ENCODE measurements at regions of chr2 and their contacts with region 1.

Region 1: DNA sequence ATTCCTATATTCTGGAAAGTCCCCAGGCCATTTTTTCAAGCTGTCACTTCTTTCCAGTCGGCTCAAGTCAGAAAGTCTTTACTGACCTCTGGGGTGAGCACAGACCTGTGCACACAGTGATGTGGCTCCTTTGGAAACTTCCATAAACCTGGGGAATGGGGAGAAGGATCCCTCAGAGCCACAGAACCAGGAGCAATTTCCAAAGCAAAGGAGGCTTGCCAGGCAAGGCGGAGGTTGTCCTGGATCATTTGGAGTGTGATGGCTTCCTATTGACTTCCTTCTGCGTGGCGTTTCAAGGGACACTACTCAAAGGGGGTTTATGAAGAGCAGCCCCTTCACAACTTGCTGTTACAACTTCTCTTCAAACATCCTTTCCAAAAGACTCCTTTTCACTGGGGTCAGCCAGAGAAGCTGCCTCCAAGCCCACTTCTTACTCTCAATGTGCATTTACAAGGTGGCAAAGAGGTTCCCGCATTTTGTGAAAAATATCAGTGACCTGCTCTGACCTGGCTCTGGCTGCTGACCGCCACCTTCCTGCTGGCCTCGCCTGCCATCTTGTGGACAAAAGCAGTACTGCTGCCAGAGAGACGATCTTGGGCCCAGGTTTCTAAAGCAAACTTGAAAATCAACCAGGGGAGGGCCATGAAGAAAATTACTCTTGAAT is 18.2 kb upstream of the TMEM247 start:
- DNase-seq: peak in 1 of 2 donors; percentile 90
- H3K4me3 ChIP-seq: no peak overlapping the region
- H3K27ac ChIP-seq: peak overlapping the region in 1 of 2 donors; percentile 45
- H3K4me1 ChIP-seq: peaks cover 0 to 8% of the 10 kb centered on the region in 2 donors
- H3K27me3 ChIP-seq: no peaks in the 10 kb centered on the region
- CTCF ChIP-seq: peak; percentile 96 to 100 (median 99)

Region 2: DNA sequence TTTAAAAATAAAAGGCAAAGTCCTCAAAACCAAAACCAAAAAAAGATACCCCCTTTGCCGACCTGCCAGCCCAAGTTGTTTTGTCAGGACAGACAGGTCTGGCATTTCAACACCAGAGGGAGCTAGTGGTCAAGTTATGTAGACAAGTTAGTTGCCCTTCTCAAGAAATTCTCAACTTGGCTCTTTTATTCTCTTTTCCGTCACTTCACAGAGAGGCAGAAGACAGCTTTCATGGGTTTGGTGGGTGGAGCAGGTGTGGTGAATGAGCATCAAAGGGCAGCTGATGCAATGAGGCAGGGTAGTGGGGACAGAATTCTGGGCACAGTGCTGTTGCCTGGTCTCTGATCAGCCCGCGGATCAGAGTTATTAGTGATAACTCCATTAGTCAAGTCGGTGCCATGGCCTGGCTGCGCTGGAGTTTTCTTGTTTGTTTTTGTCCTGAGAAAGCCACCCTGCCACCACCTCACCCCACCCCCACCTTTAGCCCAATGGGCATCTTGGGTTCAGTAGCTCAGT is 467.6 kb before region 1 on chr2:
- intact Hi-C with region 1: loop called (anchors 1 kb)
- DNase-seq: peak in 1 of 2 donors; percentile 83
- H3K4me3 ChIP-seq: no peak overlapping the region
- H3K27ac ChIP-seq: peak overlapping the region; percentile 74 to 75
- H3K4me1 ChIP-seq: peaks cover 3 to 23% of the 10 kb centered on the region in 2 donors
- H3K27me3 ChIP-seq: no peaks in the 10 kb centered on the region
- CTCF ChIP-seq: peak; percentile 58 to 87 (median 79)

Region 3: DNA sequence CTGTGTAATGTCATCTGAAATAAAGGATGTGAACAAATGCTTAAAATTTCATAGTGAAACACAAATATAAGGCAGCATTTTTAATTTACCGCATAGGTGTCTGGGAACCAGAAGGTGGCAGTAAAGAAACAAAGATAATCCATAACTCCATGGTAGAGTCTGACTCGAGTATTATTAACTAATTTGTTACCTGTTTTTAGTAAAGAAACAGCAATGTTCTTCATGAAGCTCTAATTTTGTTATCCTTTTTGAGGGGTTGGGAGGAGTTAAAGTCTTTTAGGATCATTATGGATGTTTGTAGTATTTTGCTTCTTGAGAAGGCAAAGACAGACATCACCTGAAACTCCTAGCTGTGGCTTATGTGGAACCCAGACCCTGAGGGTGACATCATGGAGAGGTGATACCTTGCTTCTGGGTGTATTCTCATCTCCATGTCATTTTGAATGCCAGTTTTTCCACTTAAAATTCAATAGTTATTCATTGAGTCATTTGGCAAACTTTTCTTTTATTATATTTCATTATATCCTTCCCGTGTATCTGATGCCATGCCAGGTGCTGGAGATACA is 450.1 kb before region 1 on chr2:
- intact Hi-C with region 1: loop called (anchors 1 kb)
- DNase-seq: no peak
- H3K4me3 ChIP-seq: no peak overlapping the region
- H3K27ac ChIP-seq: no peak overlapping the region
- H3K4me1 ChIP-seq: peaks cover 0 to 14% of the 10 kb centered on the region in 2 donors
- H3K27me3 ChIP-seq: no peaks in the 10 kb centered on the region
- CTCF ChIP-seq: peak; percentile 51 to 68 (median 65)

Region 4: DNA sequence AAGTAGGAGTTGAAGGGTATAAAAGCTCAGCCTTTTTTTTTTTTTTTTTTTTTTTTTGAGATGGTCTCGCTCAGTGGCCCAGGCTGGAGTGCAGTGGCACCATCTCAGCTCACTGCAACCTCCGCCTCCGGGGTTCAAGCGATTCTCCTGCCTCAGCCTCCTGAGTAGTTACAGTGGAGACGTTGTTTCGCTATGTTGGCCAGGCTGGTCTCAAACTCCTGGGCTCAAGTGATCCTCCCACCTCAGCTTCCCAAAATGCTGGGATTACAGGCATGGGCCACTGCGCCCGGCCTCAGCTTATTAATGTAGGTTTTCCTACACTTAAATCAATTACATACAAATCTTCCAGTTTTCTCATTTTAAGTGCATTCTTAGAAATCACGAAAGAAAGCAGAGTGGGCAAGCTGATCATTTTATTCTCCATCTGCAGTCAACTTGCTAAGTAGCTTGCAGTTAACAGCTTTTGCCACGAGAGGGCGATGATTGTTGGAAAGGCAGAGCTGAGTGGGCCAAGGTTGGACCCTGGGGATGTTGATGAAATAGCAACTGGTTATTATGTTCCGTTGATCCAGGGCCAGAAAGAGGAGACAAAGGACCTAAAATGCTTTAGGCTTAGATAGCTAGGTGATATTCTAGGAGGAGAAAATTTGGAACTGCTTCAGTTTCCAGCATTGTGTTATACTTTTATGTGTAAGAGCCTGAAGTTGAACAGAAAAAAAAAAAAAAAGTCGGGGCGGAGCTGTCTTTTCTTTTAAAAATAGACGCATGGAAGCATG is 398.3 kb before region 1 on chr2:
- intact Hi-C with region 1: loop called (anchors 1 kb)
- DNase-seq: peak; percentile 12 to 93
- H3K4me3 ChIP-seq: no peak overlapping the region
- H3K27ac ChIP-seq: no peak overlapping the region
- H3K4me1 ChIP-seq: peaks cover 3 to 4% of the 10 kb centered on the region in 2 donors
- H3K27me3 ChIP-seq: no peaks in the 10 kb centered on the region
- CTCF ChIP-seq: peak; percentile 83 to 94 (median 88)

Region 5: DNA sequence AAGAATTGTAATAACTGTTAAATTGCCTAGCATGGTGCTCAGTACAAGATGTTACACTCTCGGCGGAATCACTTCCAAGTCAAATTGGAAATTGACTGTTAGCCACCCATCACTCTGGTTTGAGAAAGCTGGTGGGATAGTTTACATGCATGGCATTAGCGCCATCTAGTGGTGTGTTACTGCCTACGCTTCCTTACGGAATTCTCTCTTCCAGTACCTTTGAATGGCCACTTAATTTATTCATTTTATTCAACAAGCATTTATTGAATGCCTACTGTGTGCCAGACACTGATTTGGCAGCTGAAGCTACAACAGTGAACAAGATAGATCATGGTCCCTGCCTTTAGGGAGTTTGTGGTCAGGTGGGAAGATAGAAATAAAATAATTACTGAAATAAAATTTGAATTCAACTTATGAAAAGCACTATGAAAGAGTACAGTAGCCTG is 189.4 kb after region 1 on chr2:
- intact Hi-C with region 1: no loop called
- DNase-seq: peak in 1 of 2 donors; percentile 84
- H3K4me3 ChIP-seq: no peak overlapping the region
- H3K27ac ChIP-seq: no peak overlapping the region
- H3K4me1 ChIP-seq: peaks cover 0 to 1% of the 10 kb centered on the region in 2 donors
- H3K27me3 ChIP-seq: no peaks in the 10 kb centered on the region
- CTCF ChIP-seq: peak; percentile 85 to 92 (median 92)

Measured in ascending aorta (tissue), 2 donors.